CD4-positive, alpha-beta memory T cell (primary cell): ENCODE measurements at regions of chr12 and their contacts with region 1.

Region 1: GRCh38 chr12:11958221-11959091 is 112.3 kb upstream of the BCL2L14 start:
- DNase-seq: peak in 1 of 5 donors; percentile 8
- H3K4me3 ChIP-seq: no peak overlapping the region
- H3K4me3 Mint-ChIP-seq: peak overlapping the region in 7 of 8 donors; percentile 13 to 65 (median 30)
- H3K27ac ChIP-seq: no peak overlapping the region
- H3K27ac Mint-ChIP-seq: peak overlapping the region in 6 of 7 donors; percentile 11 to 86 (median 74)
- H3K4me1 ChIP-seq: peaks cover 25% of the 10 kb centered on the region
- H3K4me1 Mint-ChIP-seq: peaks cover 28 to 44% (median 34%) of the 10 kb centered on the region in 4 donors
- H3K27me3 ChIP-seq: no peaks in the 10 kb centered on the region
- H3K27me3 Mint-ChIP-seq: no peaks in the 10 kb centered on the region

Region 2: GRCh38 chr12:11922361-11922760 is 36.1 kb before region 1 on chr12:
- CTCF ChIA-PET with region 1: no interaction called
- POLR2A ChIA-PET with region 1: no interaction called
- intact Hi-C with region 1: loop called (anchors 5 kb)
- DNase-seq: no peak
- H3K4me3 ChIP-seq: no peak overlapping the region
- H3K4me3 Mint-ChIP-seq: no peak overlapping the region
- H3K27ac ChIP-seq: no peak overlapping the region
- H3K27ac Mint-ChIP-seq: peak overlapping the region in 2 of 7 donors; percentile 33 to 42
- H3K4me1 ChIP-seq: peaks cover 4% of the 10 kb centered on the region
- H3K4me1 Mint-ChIP-seq: peaks cover 5 to 12% (median 10%) of the 10 kb centered on the region in 4 donors
- H3K27me3 ChIP-seq: no peaks in the 10 kb centered on the region
- H3K27me3 Mint-ChIP-seq: no peaks in the 10 kb centered on the region